IMR-90 (cell line): ENCODE measurements at regions of chr15 and their contacts with region 1.

Region 1: GRCh38 chr15:52018693-52019387 is at the start of gene MAPK6:
- DNase-seq: peak; percentile 93
- ATAC-seq: peak; percentile 89
- H3K4me3 ChIP-seq: peak within 1 kb of the TSS; percentile 90
- H3K27ac ChIP-seq: peak within 1 kb of the TSS; percentile 97
- H3K4me1 ChIP-seq: peaks cover 11% of the 10 kb centered on the region
- H3K27me3 ChIP-seq: no peaks in the 10 kb centered on the region
- CTCF ChIP-seq: no peak
- POLR2A ChIP-seq: peak; percentile 97
- RAD21 ChIP-seq: no peak
- total RNA-seq, gene MAPK6: 60.6 and 84.2 TPM in 2 replicates

Region 2: GRCh38 chr15:51907136-51907914 is 111.5 kb before region 1 on chr15:
- CTCF ChIA-PET with region 1: no interaction called
- POLR2A ChIA-PET with region 1: no interaction called
- dilution Hi-C with region 1: no loop called
- in situ Hi-C with region 1: no loop called
- intact Hi-C with region 1: no loop called
- DNase-seq: peak; percentile 42
- ATAC-seq: peak; percentile 27; the same call in 1 of the 2 replicates
- H3K4me3 ChIP-seq: no peak overlapping the region
- H3K27ac ChIP-seq: no peak overlapping the region
- H3K4me1 ChIP-seq: peaks cover 12% of the 10 kb centered on the region
- H3K27me3 ChIP-seq: no peaks in the 10 kb centered on the region
- CTCF ChIP-seq: no peak
- POLR2A ChIP-seq: no peak
- RAD21 ChIP-seq: no peak

Region 3: GRCh38 chr15:51971375-51972133 is 47.3 kb before region 1 on chr15 and contains the start of gene LEO1:
- CTCF ChIA-PET with region 1: no interaction called
- POLR2A ChIA-PET with region 1: interaction called, 3 read pairs
- dilution Hi-C with region 1: no loop called
- in situ Hi-C with region 1: no loop called
- intact Hi-C with region 1: loop called (anchors 2 kb)
- DNase-seq: peak; percentile 98
- ATAC-seq: peak; percentile 93
- H3K4me3 ChIP-seq: peak within 1 kb of the TSS; percentile 73
- H3K27ac ChIP-seq: peak within 1 kb of the TSS; percentile 91
- H3K4me1 ChIP-seq: 0 out of 2 replicates have a peak, but pooled peaks cover 2% of the 10 kb centered on the region
- H3K27me3 ChIP-seq: no peaks in the 10 kb centered on the region
- CTCF ChIP-seq: peak; percentile 38
- POLR2A ChIP-seq: peak; percentile 86
- RAD21 ChIP-seq: peak; percentile 0; the same call in 1 of the 2 replicates
- total RNA-seq, gene LEO1: 11.5 and 30.3 TPM in 2 replicates

Region 4: DNA sequence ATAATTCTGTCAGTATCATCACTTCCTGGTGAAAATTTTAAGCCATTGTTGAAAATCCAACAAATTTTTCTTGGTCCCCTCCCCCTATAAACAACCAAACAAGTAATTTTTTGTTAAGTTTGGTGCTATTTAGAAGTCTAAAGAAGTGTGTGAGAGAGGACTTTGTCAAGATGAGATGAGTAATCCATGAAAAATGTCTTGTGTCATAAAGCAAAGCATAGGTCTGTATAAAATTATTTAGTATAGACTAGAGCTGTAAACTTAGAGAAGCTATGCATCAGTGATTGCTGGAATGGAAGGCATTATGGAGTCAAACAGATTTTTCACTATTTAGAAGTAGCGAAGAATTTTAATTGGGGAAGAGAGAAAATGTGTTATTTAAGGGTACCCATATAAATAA is 31.6 kb after region 1 on chr15:
- CTCF ChIA-PET with region 1: no interaction called
- POLR2A ChIA-PET with region 1: no interaction called
- dilution Hi-C with region 1: no loop called
- in situ Hi-C with region 1: no loop called
- intact Hi-C with region 1: loop called (anchors 5 kb)
- DNase-seq: peak; percentile 77
- ATAC-seq: peak; percentile 79
- H3K4me3 ChIP-seq: no peak overlapping the region
- H3K27ac ChIP-seq: no peak overlapping the region
- H3K4me1 ChIP-seq: peaks cover 6% of the 10 kb centered on the region
- H3K27me3 ChIP-seq: no peaks in the 10 kb centered on the region
- CTCF ChIP-seq: no peak
- POLR2A ChIP-seq: no peak
- RAD21 ChIP-seq: no peak

Region 5: GRCh38 chr15:52498706-52499105 is 479.9 kb after region 1 on chr15:
- CTCF ChIA-PET with region 1: no interaction called
- POLR2A ChIA-PET with region 1: no interaction called
- dilution Hi-C with region 1: no loop called
- in situ Hi-C with region 1: no loop called
- intact Hi-C with region 1: loop called (anchors 2 kb)
- DNase-seq: no peak
- ATAC-seq: peak; percentile 64
- H3K4me3 ChIP-seq: no peak overlapping the region
- H3K27ac ChIP-seq: no peak overlapping the region
- H3K4me1 ChIP-seq: peaks cover 6% of the 10 kb centered on the region
- H3K27me3 ChIP-seq: no peaks in the 10 kb centered on the region
- CTCF ChIP-seq: no peak
- POLR2A ChIP-seq: no peak
- RAD21 ChIP-seq: no peak

Region 6: GRCh38 chr15:52651868-52652267 is 633.0 kb after region 1 on chr15:
- CTCF ChIA-PET with region 1: no interaction called
- POLR2A ChIA-PET with region 1: no interaction called
- dilution Hi-C with region 1: no loop called
- in situ Hi-C with region 1: loop called (anchors 25 kb)
- intact Hi-C with region 1: no loop called
- DNase-seq: peak; percentile 98
- ATAC-seq: peak; percentile 95
- H3K4me3 ChIP-seq: peak overlapping the region; percentile 37; the same call in 1 of the 2 replicates
- H3K27ac ChIP-seq: peak overlapping the region; percentile 24; the same call in 1 of the 2 replicates
- H3K4me1 ChIP-seq: peaks cover 5% of the 10 kb centered on the region; the same call in 1 of the 2 replicates
- H3K27me3 ChIP-seq: no peaks in the 10 kb centered on the region
- CTCF ChIP-seq: no peak
- POLR2A ChIP-seq: no peak
- RAD21 ChIP-seq: no peak